Mammary epithelial cell (primary cell): ENCODE measurements at regions of chr6 and their contacts with region 1.

Region 1: DNA sequence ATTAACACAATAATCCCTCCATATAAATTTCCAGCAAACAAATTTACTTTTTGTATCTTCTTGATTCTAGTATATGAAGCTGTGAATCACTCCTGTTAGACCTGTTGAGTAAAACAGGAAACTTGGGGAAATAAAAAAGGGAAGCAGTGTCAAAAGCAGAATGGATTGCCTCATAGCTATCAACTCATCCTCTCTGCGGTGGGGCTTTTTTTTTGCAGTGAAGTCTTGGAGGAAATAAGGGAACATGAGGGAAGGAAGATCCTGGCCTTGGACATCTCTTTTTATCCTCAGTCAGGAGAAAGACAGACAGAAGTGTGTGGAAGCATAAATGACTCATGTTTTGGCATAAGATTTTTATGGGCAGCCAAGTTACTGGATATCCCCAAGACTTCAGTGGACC is 332.5 kb downstream of the TFAP2A start:
- DNase-seq: peak; percentile 71
- H3K4me3 ChIP-seq: no peak overlapping the region
- H3K27ac ChIP-seq: no peak overlapping the region
- H3K4me1 ChIP-seq: peaks cover 37% of the 10 kb centered on the region
- H3K27me3 ChIP-seq: no peaks in the 10 kb centered on the region
- CTCF ChIP-seq: no peak

Region 2: DNA sequence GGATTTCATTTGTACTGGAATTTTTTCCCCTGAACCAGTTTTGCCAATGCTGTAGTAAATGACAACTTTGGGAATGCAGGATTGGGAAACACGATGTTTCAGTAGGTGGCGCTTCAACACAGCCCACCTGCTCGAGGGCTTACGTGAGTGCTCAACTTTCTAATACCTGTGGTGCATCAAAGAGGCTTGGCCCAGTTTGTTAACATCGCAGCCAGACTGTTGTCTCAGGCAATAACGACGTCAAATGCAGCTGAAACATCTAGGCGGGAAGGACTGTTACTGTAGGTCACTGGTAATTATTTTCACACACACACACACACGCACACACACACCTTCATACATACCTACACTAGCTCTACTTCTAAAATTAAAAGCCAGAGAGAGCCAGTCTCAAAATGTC is 831.5 kb before region 1 on chr6:
- CTCF ChIA-PET with region 1: no interaction called
- dilution Hi-C with region 1: no loop called
- in situ Hi-C with region 1: no loop called
- intact Hi-C with region 1: loop called (anchors 5 kb)
- DNase-seq: peak; percentile 61
- H3K4me3 ChIP-seq: no peak overlapping the region
- H3K27ac ChIP-seq: no peak overlapping the region
- H3K4me1 ChIP-seq: no peaks in the 10 kb centered on the region
- H3K27me3 ChIP-seq: no peaks in the 10 kb centered on the region
- CTCF ChIP-seq: peak; percentile 72 to 85

Region 3: GRCh38 chr6:10014557-10014956 is 67.8 kb before region 1 on chr6:
- CTCF ChIA-PET with region 1: interaction called, 12 read pairs
- dilution Hi-C with region 1: no loop called
- in situ Hi-C with region 1: no loop called
- intact Hi-C with region 1: no loop called
- DNase-seq: no peak
- H3K4me3 ChIP-seq: no peak overlapping the region
- H3K27ac ChIP-seq: no peak overlapping the region
- H3K4me1 ChIP-seq: no peaks in the 10 kb centered on the region
- H3K27me3 ChIP-seq: no peaks in the 10 kb centered on the region
- CTCF ChIP-seq: no peak

Region 4: GRCh38 chr6:10201606-10202539 is 119.5 kb after region 1 on chr6:
- CTCF ChIA-PET with region 1: no interaction called
- dilution Hi-C with region 1: no loop called
- in situ Hi-C with region 1: no loop called
- intact Hi-C with region 1: loop called (anchors 1 kb)
- DNase-seq: peak; percentile 73
- H3K4me3 ChIP-seq: no peak overlapping the region
- H3K27ac ChIP-seq: peak overlapping the region; percentile 69
- H3K4me1 ChIP-seq: peaks cover 17% of the 10 kb centered on the region
- H3K27me3 ChIP-seq: no peaks in the 10 kb centered on the region
- CTCF ChIP-seq: no peak

Region 5: DNA sequence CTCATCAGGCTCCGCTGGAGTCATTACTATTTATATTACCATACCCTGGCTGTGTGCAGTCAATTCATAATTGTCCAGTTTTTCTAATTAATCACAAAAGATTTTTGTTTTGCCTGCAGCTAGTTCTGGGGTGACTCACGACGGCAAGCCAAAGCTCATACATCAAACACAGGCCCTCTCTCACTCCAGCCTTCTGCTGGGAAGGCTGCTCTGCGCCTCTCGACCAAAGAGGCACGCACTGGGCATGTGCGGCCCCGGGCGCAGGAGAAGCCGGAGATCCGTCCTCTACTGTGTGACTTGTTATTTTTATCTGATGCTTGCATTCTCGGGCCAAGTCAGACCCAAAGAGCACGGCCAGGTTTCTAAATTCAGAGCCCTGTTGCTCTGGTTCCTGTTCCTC is 233.9 kb after region 1 on chr6:
- CTCF ChIA-PET with region 1: interaction called, 17 read pairs
- dilution Hi-C with region 1: no loop called
- in situ Hi-C with region 1: no loop called
- intact Hi-C with region 1: no loop called
- DNase-seq: peak; percentile 95
- H3K4me3 ChIP-seq: peak overlapping the region in 1 of 3 experiments; percentile 26
- H3K27ac ChIP-seq: peak overlapping the region; percentile 57
- H3K4me1 ChIP-seq: peaks cover 13% of the 10 kb centered on the region
- H3K27me3 ChIP-seq: no peaks in the 10 kb centered on the region
- CTCF ChIP-seq: no peak

Region 6: GRCh38 chr6:10347561-10348327 is 265.4 kb after region 1 on chr6:
- CTCF ChIA-PET with region 1: no interaction called
- dilution Hi-C with region 1: no loop called
- in situ Hi-C with region 1: no loop called
- intact Hi-C with region 1: loop called (anchors 1 kb)
- DNase-seq: peak; percentile 99
- H3K4me3 ChIP-seq: no peak overlapping the region
- H3K27ac ChIP-seq: peak overlapping the region; percentile 98
- H3K4me1 ChIP-seq: peaks cover 14% of the 10 kb centered on the region
- H3K27me3 ChIP-seq: no peaks in the 10 kb centered on the region
- CTCF ChIP-seq: no peak